Aorta (tissue), 5 donors: ENCODE measurements at regions of chr11 and their contacts with region 1.

Region 1: GRCh38 chr11:117143871-117144476 is at the start of gene PAFAH1B2:
- DNase-seq: peak; percentile 97 to 98
- ATAC-seq: peak; percentile 99
- H3K4me3 ChIP-seq: peak within 1 kb of the TSS; percentile 70 to 80
- H3K27ac ChIP-seq: peak within 1 kb of the TSS; percentile 71 to 88
- H3K4me1 ChIP-seq: peaks cover 0 to 2% of the 10 kb centered on the region in 2 donors
- H3K27me3 ChIP-seq: no peaks in the 10 kb centered on the region
- total RNA-seq, gene PAFAH1B2: 69.9 to 73.5 TPM

Region 2: DNA sequence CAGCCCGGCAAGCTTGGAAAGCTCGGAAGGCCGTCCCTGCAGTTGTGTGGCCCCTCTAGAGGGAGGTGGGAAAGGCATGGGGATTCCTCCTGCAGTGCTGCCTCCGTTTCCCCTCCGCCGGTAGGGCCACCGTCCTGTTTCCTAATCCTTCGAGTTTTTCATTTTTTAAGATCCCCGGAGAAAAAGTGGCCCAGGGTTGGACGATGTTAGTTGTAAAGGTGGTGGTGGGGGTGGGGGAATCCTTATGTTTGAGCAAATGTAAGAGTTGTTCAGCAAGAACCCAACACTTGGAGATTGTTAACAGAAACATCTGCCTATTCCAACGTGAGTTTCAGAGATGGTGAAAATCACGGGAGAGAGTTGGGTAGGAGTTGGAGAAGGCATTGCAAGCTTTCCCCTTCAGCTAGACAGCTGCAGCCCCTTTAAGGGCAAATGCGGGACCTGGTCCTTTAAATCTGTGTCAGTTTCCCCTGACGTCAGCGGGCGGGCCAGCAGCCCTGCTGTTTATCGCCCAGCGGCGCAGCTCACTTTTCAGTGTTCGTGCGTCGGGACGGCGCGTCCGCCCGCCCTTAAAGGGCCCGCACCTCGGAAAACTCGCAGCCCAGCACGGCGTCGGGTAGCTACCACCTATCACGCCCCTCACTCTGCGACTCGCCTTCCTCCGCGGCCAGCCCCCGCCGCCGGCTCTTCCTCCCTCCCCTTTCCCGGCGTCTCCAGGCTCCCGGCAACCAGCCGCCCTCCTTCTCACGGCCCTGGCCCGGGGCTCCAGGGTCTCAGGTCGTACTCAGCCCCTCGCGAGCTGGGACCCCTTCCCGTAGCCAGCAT is 34.4 kb after region 1 on chr11 and contains the start of gene SIDT2:
- intact Hi-C with region 1: loop called in 1 of 2 experiments (anchors 2 kb)
- DNase-seq: peak; percentile 97 to 98
- ATAC-seq: peak; percentile 97
- H3K4me3 ChIP-seq: peak within 1 kb of the TSS; percentile 74 to 96
- H3K27ac ChIP-seq: peak within 1 kb of the TSS; percentile 50 to 84
- H3K4me1 ChIP-seq: peaks cover 0 to 3% of the 10 kb centered on the region in 2 donors
- H3K27me3 ChIP-seq: no peaks in the 10 kb centered on the region
- total RNA-seq, gene SIDT2: 51.2 to 81.3 TPM

Region 3: DNA sequence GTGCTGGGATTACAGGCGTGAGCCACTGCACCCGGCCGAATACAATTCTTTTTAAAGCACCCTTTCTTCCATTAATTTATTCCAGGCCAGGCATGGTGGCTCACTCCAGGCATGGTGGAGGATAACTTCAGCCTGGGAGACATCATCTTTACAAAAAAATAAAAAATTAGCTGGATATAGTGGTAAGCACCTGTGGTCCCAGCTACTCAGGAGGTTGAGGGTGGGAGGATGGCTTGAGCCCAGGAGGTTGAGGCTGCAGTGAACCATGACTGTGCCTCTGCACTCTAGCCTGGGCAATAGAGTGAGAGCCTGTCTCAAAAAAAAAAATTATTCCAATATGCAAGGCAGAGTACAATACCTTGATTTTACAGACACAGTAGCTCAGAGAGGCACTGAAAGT is 66.6 kb after region 1 on chr11:
- intact Hi-C with region 1: no loop called
- DNase-seq: no peak
- ATAC-seq: no peak
- H3K4me3 ChIP-seq: no peak overlapping the region
- H3K27ac ChIP-seq: no peak overlapping the region
- H3K4me1 ChIP-seq: no peaks in the 10 kb centered on the region
- H3K27me3 ChIP-seq: no peaks in the 10 kb centered on the region